ENCODE measurements at regions of chr10 and their contacts with region 1.

Region 1: GRCh38 chr10:93352638-93353383 is 129.3 kb downstream of the MYOF start:
- DNase-seq: peak; percentile 31 to 45 (median 36)
- ATAC-seq: 0 out of 3 replicates have a peak, but pooled peaks have one; percentile 38
- H3K4me3 ChIP-seq: no peak overlapping the region
- H3K27ac ChIP-seq: no peak overlapping the region
- H3K4me1 ChIP-seq: no peaks in the 10 kb centered on the region
- H3K27me3 ChIP-seq: peaks cover 2 to 11% of the 10 kb centered on the region in 2 experiments; a peak in 3 of 5 replicates
- CTCF ChIP-seq: peak in 2 of 3 experiments; percentile 39 to 61; a peak in 4 of 6 replicates
- EP300 ChIP-seq: no peak
- POLR2A ChIP-seq: no peak
- RAD21 ChIP-seq: peak; percentile 59 to 70

Region 2: GRCh38 chr10:93080350-93081046 is 272.3 kb before region 1 on chr10:
- CTCF ChIA-PET with region 1: interaction called, 3 read pairs
- POLR2A ChIA-PET with region 1: interaction called, 3 read pairs
- in situ Hi-C with region 1: loop called (anchors 10 kb)
- intact Hi-C with region 1: loop called (anchors 2 kb)
- DNase-seq: peak; percentile 67 to 76 (median 73)
- ATAC-seq: peak; percentile 85
- H3K4me3 ChIP-seq: no peak overlapping the region
- H3K27ac ChIP-seq: no peak overlapping the region
- H3K4me1 ChIP-seq: peaks cover 0 to 12% of the 10 kb centered on the region in 2 experiments; a peak in 3 of 5 replicates
- H3K27me3 ChIP-seq: peaks cover 2 to 11% of the 10 kb centered on the region in 2 experiments; a peak in 3 of 5 replicates
- CTCF ChIP-seq: peak; percentile 72 to 86 (median 77)
- EP300 ChIP-seq: no peak
- POLR2A ChIP-seq: no peak
- RAD21 ChIP-seq: peak; percentile 63 to 82

Region 3: DNA sequence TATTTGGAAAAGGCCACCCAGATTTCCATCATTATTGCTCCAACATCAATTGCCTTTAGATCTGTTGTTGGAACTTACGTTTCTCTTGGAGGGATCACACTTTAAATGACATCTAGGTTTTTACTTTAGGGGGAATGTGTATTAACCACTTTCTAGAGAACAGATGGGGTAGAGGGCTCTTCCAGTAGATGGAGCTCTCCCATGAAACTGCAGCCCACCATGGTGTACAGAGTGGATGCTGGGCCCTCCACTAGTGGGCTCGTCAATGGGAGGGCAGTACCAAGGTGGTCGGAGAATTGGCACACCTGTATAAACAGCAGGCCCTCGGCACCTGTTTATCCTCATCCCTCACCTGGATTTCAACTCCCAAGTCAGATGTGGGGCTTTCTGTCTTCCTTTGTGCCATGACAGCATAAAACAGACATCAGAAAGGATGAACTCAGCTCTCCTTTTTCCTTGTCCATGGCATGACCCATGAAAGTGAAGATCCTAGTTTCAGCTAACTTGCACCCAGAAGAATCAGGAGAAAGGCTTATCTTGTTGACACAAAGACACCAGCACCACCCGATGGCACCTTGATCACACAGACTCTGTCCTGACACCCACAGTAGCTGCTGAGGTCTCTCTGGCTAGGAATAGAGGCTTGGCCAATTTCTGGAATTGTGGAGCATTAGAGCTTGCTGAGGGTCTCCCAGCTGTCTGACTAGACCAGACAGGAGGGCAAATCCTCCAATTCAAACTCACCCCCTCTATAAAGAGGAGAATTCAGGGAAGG is 128.6 kb before region 1 on chr10:
- CTCF ChIA-PET with region 1: no interaction called
- POLR2A ChIA-PET with region 1: no interaction called
- in situ Hi-C with region 1: no loop called
- intact Hi-C with region 1: loop called (anchors 10 kb)
- DNase-seq: no peak
- ATAC-seq: no peak
- H3K4me3 ChIP-seq: no peak overlapping the region
- H3K27ac ChIP-seq: no peak overlapping the region
- H3K4me1 ChIP-seq: peaks cover 3 to 6% of the 10 kb centered on the region in 2 experiments; a peak in 2 of 5 replicates
- H3K27me3 ChIP-seq: no peaks in the 10 kb centered on the region; a peak in 1 of 5 replicates
- CTCF ChIP-seq: peak in 1 of 3 experiments; percentile 24; a peak in 2 of 6 replicates
- EP300 ChIP-seq: no peak
- POLR2A ChIP-seq: no peak
- RAD21 ChIP-seq: no peak; a peak in 1 of 4 replicates